Upper lobe of right lung (tissue), 1 donor: ENCODE measurements at regions of chr12 and their contacts with region 1.

Region 1: GRCh38 chr12:49776413-49776812 is 35.1 kb downstream of the TMBIM6 start:
- DNase-seq: peak; percentile 78
- ATAC-seq: peak; percentile 95
- H3K4me3 ChIP-seq: no peak overlapping the region
- H3K27ac ChIP-seq: no peak overlapping the region
- H3K4me1 ChIP-seq: peaks cover 6% of the 10 kb centered on the region
- H3K27me3 ChIP-seq: no peaks in the 10 kb centered on the region
- CTCF ChIP-seq: peak; percentile 80

Region 2: DNA sequence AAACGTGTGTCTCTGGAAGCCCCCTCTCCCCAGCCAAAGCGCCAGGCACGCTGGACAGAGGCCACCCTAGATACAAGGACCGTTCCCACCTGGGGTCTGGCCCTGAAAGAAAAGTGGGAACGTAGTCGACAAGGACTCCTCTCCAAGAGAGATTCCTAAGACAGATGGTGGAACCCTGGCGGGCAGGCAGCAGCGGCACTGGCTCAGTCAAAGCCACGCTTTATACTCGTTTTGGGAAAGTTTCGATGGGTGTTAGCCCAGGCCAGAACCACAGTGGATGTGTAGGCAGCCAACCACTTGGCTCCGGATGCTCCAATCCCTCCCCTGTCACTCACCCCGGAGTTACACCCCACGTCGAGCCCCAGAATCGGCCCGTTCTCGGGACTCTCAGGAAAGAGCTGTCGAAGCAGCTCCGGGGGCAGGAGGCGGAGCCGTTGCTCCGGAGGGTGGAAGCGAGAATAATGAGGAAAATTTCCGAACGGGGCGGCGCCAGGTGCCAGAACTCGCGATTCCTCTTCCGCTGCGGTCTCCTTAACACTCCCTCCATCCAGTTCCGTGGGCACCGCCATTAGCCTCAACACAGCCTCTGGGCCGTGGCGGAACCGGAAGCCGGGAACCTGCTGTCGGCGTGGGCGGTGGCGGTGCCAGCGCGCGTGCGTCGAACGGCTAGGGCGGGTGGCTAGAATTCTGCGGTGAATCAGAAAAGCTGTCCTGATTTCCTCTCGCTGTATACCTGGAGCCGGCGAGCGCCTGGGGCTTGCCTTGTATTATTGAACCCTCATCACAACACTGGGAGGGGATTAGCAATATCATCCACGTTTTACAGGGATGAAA is 66.3 kb after region 1 on chr12 and contains the start of gene BCDIN3D:
- intact Hi-C with region 1: loop called (anchors 5 kb)
- DNase-seq: peak; percentile 97
- ATAC-seq: peak; percentile 98
- H3K4me3 ChIP-seq: peak within 1 kb of the TSS; percentile 75
- H3K27ac ChIP-seq: peak within 1 kb of the TSS; percentile 91
- H3K4me1 ChIP-seq: peaks cover 17% of the 10 kb centered on the region
- H3K27me3 ChIP-seq: no peaks in the 10 kb centered on the region
- CTCF ChIP-seq: no peak
- total RNA-seq, gene BCDIN3D: 4.9 TPM